ENCODE measurements at regions of chr6 and their contacts with region 1.

Region 1: DNA sequence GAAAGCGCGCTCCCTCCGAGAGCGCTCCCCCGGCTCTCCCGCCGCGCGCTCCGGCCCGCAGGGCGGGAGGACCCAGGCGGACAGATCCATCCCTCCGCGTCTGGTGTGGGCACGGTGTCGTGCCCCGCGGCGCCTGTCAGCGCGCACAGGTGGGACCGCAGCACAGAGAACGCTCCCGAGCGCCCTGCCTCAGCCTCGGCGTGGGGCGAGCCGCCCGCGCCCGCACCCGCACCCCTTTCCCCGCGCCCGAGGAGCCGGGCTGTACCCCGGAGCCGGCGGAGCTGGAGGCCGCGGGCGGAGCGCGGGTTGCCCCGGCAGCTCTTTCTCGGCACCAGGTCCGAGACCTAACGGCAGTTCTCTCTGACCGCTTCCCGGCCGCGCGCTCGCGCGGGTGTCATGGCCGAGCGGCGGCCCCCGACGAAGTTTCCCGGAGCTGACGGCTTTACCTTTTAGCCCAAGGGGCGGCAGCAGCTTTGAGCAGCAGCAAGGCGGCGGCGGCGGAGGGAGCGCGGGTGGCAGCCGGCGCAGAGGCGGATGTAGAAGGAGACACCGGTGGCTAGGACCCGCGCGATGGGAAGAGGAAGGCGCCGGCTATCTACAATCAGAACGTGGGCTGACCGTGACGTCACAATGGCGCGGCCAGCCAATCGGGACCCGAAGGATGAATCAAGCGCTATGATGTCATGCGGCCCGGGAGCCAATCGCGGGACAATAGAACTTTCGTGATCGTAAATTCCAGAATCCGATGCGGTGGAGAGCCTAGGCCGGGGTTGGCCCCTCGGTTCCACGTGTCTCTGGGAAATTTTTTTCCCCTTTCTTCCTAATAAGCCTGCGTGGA is at the start of gene ELOVL5:
- DNase-seq: peak; percentile 94
- H3K4me3 Mint-ChIP-seq: peak within 1 kb of the TSS; percentile 96
- H3K27ac Mint-ChIP-seq: peak within 1 kb of the TSS; percentile 93
- H3K4me1 Mint-ChIP-seq: peaks cover 48% of the 10 kb centered on the region
- H3K27me3 Mint-ChIP-seq: peaks cover 8% of the 10 kb centered on the region
- total RNA-seq, gene ELOVL5: 121 and 131 TPM in 2 replicates

Region 2: DNA sequence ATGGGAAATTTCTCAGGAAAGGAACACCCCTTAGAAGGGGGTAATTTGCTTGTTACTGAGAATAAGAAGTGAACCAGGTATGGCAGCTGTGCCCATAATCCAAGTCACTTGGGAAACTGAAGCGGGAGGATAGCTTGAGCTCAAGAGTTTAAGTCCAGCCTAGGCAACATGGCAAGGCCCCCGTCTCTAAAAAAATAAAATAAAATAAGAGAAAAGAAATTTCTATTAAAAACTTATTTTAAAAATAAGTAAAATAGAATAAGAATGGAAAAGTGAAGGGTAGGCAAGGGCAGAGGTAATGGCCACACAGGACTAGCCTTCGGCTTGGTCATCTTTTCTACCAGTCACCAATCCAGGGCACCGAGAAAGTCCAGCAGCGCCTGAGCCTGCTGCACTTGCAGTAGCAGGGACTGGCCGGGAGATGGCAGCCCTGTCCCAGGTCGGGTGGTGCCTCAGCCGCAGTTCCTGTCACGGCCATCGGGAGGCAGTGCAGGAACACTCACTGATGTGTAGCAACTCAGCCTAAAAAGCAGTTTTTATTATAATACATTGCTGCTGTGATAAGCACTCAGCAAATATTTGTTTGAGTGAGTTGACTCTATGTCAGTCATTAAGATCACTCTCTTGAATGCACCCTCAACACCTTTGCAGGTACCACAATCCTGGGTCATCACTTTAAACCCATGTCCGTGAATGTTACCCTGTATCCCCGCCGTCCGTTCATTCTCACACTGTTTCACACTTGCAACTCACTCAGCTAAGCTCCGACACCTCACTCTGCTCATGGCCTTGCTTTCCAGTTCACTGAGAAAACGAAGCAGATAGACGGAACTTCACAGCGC is 176.8 kb before region 1 on chr6:
- intact Hi-C with region 1: loop called (anchors 1 kb)
- DNase-seq: peak; percentile 82
- H3K4me3 Mint-ChIP-seq: no peak overlapping the region
- H3K27ac Mint-ChIP-seq: no peak overlapping the region
- H3K4me1 Mint-ChIP-seq: no peaks in the 10 kb centered on the region
- H3K27me3 Mint-ChIP-seq: no peaks in the 10 kb centered on the region

Region 3: DNA sequence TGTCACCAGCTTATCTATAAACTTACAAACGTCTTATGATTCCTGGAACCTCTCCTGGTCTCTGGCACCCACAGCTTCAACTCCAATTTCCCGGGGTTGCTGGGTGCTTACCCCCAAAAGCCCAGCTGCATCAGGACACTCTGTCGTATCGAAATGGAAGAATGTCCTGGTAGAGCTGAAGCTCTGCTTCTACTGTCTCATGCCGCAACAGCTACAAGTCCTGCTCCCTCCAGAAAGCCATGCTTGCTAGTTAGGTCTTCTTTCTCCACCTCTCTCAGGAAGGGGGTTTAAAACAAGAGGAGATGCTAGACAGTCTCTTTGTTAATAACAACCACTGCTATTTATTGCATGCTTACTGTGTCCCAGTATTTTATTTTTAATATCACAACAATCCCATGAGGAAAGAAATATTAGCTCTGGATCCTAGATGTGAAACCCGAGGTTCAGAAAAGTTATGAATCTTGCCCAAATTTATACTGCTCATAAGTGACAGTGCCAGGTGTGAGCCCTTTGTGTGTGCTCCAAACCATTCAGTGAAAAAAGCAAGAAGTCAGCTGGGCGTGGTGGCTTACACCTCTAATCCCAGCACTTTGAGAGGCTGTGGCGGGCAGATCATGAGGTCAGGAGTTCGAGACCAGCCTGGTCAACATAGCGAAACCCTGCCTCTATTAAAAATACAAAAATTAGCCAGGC is 117.7 kb before region 1 on chr6:
- intact Hi-C with region 1: loop called (anchors 1 kb)
- DNase-seq: no peak
- H3K4me3 Mint-ChIP-seq: no peak overlapping the region
- H3K27ac Mint-ChIP-seq: no peak overlapping the region
- H3K4me1 Mint-ChIP-seq: peaks cover 16% of the 10 kb centered on the region
- H3K27me3 Mint-ChIP-seq: no peaks in the 10 kb centered on the region

Region 4: DNA sequence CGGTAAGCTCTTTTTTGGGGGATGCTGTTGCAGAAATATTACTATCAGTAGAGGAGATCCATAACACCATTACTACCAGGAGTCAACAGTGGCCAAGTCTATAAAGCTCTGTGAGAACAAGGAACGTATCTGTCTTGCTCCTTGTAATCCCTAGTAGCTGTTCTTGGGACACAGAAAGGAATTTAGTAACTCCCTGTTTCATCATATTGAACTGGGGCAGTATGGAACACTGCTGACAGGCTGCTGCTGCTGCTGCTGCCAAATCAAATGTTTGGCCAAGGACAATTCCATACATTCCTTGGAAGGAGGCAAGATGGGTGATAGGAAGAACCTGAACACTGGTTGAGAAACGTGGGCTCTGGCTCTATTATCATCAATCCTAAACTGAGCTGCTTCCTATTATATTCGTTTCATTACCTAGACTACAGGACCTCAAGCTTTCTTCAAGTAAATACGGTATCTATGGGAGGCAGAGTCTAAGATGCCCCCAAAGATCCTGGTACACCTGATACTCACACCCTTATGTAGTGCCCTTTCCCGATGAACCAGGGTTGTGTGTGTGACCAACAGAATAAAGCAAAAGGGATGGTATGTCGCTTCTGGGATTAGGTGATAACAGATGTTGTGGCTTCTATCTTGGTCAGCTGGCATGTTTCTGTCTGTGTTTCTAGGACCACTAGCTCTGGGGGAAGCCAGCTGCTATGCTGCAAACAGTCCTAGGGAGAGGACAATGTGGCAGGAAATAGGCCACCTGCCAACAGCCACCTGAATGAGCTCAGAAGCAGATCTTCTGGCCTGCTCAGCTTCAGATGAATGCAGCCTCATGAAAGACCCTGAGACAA is 39.3 kb before region 1 on chr6:
- intact Hi-C with region 1: loop called (anchors 1 kb)
- DNase-seq: no peak
- H3K4me3 Mint-ChIP-seq: no peak overlapping the region
- H3K27ac Mint-ChIP-seq: peak overlapping the region; percentile 27
- H3K4me1 Mint-ChIP-seq: peaks cover 83% of the 10 kb centered on the region
- H3K27me3 Mint-ChIP-seq: no peaks in the 10 kb centered on the region

Region 5: GRCh38 chr6:53359072-53359842 is 10.7 kb after region 1 on chr6:
- intact Hi-C with region 1: loop called (anchors 1 kb)
- DNase-seq: peak; percentile 93
- H3K4me3 Mint-ChIP-seq: peak overlapping the region; percentile 92
- H3K27ac Mint-ChIP-seq: peak overlapping the region; percentile 100
- H3K4me1 Mint-ChIP-seq: peaks cover 50% of the 10 kb centered on the region
- H3K27me3 Mint-ChIP-seq: peaks cover 5% of the 10 kb centered on the region

Region 6: GRCh38 chr6:53426667-53427270 is 78.2 kb after region 1 on chr6:
- intact Hi-C with region 1: loop called (anchors 5 kb)
- DNase-seq: no peak
- H3K4me3 Mint-ChIP-seq: no peak overlapping the region
- H3K27ac Mint-ChIP-seq: no peak overlapping the region
- H3K4me1 Mint-ChIP-seq: peaks cover 28% of the 10 kb centered on the region
- H3K27me3 Mint-ChIP-seq: no peaks in the 10 kb centered on the region

Measured in activated T-helper 1 cell treated with anti-CD3 and anti-CD28 coated beads, Interleukin-12 subunit alpha, Interleukin-12 subunit beta, Interleukin-2, Interleukin-4 antibody, amounts not matched to agents 30 ng/mL and 10 ng/mL and 1 ng/mL, durations not matched to agents 14 hours and 24 hours and 36 hours (primary cell).